PC-9 (cell line): ENCODE measurements at regions of chr20 and their contacts with region 1.

Region 1: DNA sequence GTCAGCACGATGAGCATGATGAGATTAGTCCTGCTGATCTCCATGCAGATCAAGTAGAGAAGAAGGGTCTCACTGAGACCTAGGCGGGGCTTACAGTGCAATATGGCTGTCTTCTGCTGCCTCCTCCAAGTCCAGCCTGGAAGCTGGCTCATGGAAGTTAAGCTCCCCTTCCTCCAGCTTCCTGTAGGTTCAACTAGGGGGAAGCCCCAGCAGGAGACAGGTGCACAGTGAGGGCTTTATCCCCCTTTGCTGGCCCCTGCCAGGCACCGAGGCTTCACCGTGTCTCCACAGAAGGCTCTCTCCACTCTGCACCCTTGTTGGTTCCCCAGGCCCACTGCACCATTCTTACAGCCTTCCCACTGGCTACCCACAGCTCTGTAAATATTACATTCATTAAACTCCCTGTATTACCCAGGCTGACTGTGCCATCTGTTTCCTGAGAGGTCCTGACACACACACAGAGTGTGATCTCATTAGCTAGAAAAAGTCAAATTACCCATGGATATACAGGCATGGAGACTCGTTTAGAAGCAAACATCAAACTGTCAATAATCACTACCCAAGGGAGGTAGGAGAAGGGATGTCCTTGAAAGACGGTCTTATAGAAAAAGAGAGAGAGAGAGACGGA is 90.4 kb downstream of the SLC2A10 start:
- DNase-seq: no peak
- H3K4me3 ChIP-seq: no peak overlapping the region
- H3K27ac ChIP-seq: no peak overlapping the region
- H3K4me1 ChIP-seq: no peaks in the 10 kb centered on the region
- H3K27me3 ChIP-seq: peaks cover 48% of the 10 kb centered on the region
- CTCF ChIP-seq: no peak

Region 2: GRCh38 chr20:46785958-46786357 is 13.9 kb before region 1 on chr20:
- CTCF ChIA-PET with region 1: interaction called, 13 read pairs
- POLR2A ChIA-PET with region 1: no interaction called
- intact Hi-C with region 1: no loop called
- DNase-seq: no peak
- H3K4me3 ChIP-seq: no peak overlapping the region
- H3K27ac ChIP-seq: no peak overlapping the region
- H3K4me1 ChIP-seq: no peaks in the 10 kb centered on the region
- H3K27me3 ChIP-seq: no peaks in the 10 kb centered on the region
- CTCF ChIP-seq: no peak

Region 3: GRCh38 chr20:46814366-46815242 is 14.7 kb after region 1 on chr20:
- CTCF ChIA-PET with region 1: no interaction called
- POLR2A ChIA-PET with region 1: no interaction called
- intact Hi-C with region 1: loop called (anchors 1 kb)
- DNase-seq: peak; percentile 83 to 97
- H3K4me3 ChIP-seq: peak overlapping the region; percentile 31; the same call in 1 of the 2 replicates
- H3K27ac ChIP-seq: peak overlapping the region; percentile 69
- H3K4me1 ChIP-seq: peaks cover 31% of the 10 kb centered on the region
- H3K27me3 ChIP-seq: no peaks in the 10 kb centered on the region
- CTCF ChIP-seq: no peak